Cardiac septum (tissue), 1 donor: ENCODE measurements at regions of chr6 and their contacts with region 1.

Region 1: GRCh38 chr6:84910906-84911607 is 146.7 kb upstream of the TBX18 start:
- DNase-seq: no peak

Region 2: GRCh38 chr6:84141521-84141920 is 769.5 kb before region 1 on chr6:
- intact Hi-C with region 1: no loop called
- DNase-seq: no peak

Region 3: DNA sequence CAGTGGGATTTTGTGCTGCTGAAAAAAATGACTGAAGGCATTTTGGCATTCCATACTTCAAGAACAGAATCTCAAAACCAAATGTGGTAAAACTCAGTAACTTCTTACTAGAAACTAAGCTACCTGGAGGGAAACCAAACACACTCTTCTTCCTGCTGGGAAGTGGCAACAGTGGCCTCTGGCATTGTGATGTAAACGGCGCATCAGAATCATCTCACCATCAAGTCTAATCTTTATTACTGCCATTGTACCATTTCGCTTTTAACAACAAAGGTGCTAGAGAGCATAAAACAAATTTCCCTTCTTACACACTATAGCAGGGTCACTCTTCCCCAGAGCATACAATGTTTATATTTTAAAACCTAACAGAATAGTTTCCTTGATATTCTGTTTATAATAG is 582.0 kb before region 1 on chr6:
- intact Hi-C with region 1: loop called (anchors 5 kb)
- DNase-seq: no peak

Region 4: DNA sequence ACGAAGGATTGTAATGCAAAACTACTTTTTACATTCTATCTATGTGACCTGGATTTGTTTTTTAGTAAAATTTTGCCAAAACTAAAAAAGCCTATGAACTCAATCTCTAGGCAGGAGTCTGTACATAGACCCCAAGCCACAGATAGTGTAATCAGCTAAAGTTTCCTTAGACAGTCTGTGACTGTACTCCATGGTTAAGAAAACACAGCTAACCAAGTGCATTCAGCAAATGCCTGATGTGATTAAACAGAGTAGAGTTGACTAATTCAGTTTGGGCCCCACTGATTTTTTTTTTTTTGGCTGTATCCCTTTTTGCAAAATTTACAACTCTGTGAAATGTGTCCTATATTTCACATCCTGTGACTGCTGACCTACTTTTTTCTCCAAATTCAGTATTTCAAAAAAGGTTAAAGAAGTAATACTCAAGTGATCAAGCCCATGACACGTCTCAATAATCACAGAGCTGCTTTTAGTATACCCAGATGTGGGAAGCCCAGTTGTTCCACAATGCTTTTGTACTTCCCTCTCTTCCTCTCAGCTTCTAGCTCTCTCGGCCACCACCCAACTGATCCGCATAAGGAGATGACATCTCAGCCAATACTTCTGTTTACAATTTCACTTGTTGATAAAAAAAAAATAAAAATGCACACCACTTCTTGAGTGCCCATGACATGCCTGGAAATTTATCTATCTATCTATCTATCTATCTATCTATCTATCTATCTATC is 37.9 kb before region 1 on chr6:
- intact Hi-C with region 1: no loop called
- DNase-seq: no peak

Region 5: GRCh38 chr6:84953111-84953755 is 42.2 kb after region 1 on chr6:
- intact Hi-C with region 1: no loop called
- DNase-seq: no peak